Gastrocnemius medialis (tissue), 4 donors: ENCODE measurements at regions of chr4 and their contacts with region 1.

Region 1: GRCh38 chr4:100093091-100093866 is 97.0 kb downstream of the DDIT4L start:
- DNase-seq: peak; percentile 78 to 87
- ATAC-seq: peak; percentile 86 to 94
- H3K4me3 ChIP-seq: no peak overlapping the region
- H3K27ac ChIP-seq: peak overlapping the region; percentile 71 to 78 (median 74)
- H3K4me1 ChIP-seq: peaks cover 26 to 34% of the 10 kb centered on the region in 2 donors
- H3K27me3 ChIP-seq: no peaks in the 10 kb centered on the region
- CTCF ChIP-seq: peak; percentile 77 to 84 (median 82)
- POLR2A ChIP-seq: no peak

Region 2: GRCh38 chr4:99755223-99755944 is 337.9 kb before region 1 on chr4:
- in situ Hi-C with region 1: no loop called
- intact Hi-C with region 1: no loop called
- DNase-seq: no peak
- ATAC-seq: no peak
- H3K4me3 ChIP-seq: no peak overlapping the region
- H3K27ac ChIP-seq: no peak overlapping the region
- H3K4me1 ChIP-seq: peaks cover under 1 to 12% of the 10 kb centered on the region in 2 donors
- H3K27me3 ChIP-seq: no peaks in the 10 kb centered on the region
- CTCF ChIP-seq: no peak
- POLR2A ChIP-seq: no peak

Region 3: DNA sequence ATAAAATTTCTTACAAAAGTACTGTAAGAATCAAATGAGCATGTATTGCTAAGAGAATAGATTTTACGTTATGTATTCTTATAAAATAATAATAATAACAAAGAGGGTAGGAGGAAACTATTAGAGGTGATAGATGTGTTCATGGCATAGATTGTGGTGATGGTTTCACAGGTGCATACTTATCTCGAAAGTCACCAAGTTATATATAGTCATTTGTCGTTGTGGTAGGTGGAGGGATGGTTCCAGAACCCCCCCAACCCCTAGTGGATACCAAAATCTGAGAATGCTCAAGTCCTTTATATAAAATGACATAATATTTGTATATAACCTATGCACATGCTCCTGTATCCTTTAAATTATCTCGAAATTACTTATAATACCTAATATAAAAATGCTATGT is 106.5 kb before region 1 on chr4:
- in situ Hi-C with region 1: no loop called
- intact Hi-C with region 1: no loop called
- DNase-seq: no peak
- ATAC-seq: no peak
- H3K4me3 ChIP-seq: no peak overlapping the region
- H3K27ac ChIP-seq: no peak overlapping the region
- H3K4me1 ChIP-seq: no peaks in the 10 kb centered on the region
- H3K27me3 ChIP-seq: no peaks in the 10 kb centered on the region
- CTCF ChIP-seq: no peak
- POLR2A ChIP-seq: no peak

Region 4: GRCh38 chr4:100189820-100190642 is 96.8 kb after region 1 on chr4 and contains the start of gene DDIT4L:
- in situ Hi-C with region 1: no loop called
- intact Hi-C with region 1: loop called (anchors 1 kb)
- DNase-seq: peak; percentile 78 to 83
- ATAC-seq: peak; percentile 60 to 67
- H3K4me3 ChIP-seq: peak within 1 kb of the TSS; percentile 78 to 95 (median 84)
- H3K27ac ChIP-seq: peak within 1 kb of the TSS; percentile 93 to 97 (median 96)
- H3K4me1 ChIP-seq: peaks cover 15 to 24% of the 10 kb centered on the region in 2 donors
- H3K27me3 ChIP-seq: no peaks in the 10 kb centered on the region
- CTCF ChIP-seq: peak in 1 of 5 experiments; percentile 1
- POLR2A ChIP-seq: peak; percentile 91 to 96
- total RNA-seq, gene DDIT4L: 41.8 to 99.7 (median 69.9) TPM

Region 5: DNA sequence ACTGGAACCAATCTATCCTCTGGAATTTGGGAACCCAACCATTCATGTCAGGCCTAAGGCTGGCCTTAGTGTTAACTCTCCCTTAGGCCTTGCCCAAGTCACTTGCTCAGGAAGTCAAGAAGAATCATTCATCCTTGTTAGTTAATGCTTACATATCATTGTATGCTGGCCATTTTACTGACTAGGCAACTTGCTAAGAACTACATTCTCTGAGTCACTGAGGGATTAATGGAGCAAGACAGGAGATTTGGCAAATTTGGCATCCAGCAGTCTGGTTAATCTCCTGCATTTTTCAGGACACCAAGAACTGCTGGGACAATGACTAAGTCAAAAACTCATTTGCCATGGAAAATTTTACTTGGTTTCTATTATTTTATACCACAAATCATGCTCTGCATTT is 212.7 kb after region 1 on chr4:
- in situ Hi-C with region 1: no loop called
- intact Hi-C with region 1: loop called (anchors 5 kb)
- DNase-seq: no peak
- ATAC-seq: no peak
- H3K4me3 ChIP-seq: no peak overlapping the region
- H3K27ac ChIP-seq: peak overlapping the region; percentile 66 to 87 (median 77)
- H3K4me1 ChIP-seq: peaks cover 22 to 33% of the 10 kb centered on the region in 2 donors
- H3K27me3 ChIP-seq: no peaks in the 10 kb centered on the region
- CTCF ChIP-seq: no peak
- POLR2A ChIP-seq: no peak

Region 6: DNA sequence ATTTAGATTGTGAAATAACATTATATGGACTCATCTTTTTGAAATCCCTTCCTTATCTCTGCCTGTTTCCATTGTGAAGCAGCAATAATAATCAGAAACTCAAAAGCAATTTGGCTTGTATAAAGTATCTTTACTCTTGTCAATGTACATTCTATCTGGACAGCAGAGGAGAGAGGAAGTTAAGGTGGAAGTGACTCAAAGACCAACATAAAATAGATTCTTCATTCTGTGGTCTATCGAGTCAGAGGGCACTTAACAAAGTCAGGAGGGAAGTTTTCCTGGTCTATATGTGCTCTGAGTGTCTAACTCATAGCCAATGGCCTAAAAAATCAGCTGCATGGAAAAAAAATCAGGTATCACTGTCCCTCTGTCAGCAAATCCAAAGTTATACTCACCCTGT is 269.1 kb after region 1 on chr4:
- in situ Hi-C with region 1: no loop called
- intact Hi-C with region 1: no loop called
- DNase-seq: no peak
- ATAC-seq: no peak
- H3K4me3 ChIP-seq: no peak overlapping the region
- H3K27ac ChIP-seq: no peak overlapping the region
- H3K4me1 ChIP-seq: peaks cover 5 to 6% of the 10 kb centered on the region in 2 donors
- H3K27me3 ChIP-seq: no peaks in the 10 kb centered on the region
- CTCF ChIP-seq: no peak
- POLR2A ChIP-seq: no peak

Region 7: DNA sequence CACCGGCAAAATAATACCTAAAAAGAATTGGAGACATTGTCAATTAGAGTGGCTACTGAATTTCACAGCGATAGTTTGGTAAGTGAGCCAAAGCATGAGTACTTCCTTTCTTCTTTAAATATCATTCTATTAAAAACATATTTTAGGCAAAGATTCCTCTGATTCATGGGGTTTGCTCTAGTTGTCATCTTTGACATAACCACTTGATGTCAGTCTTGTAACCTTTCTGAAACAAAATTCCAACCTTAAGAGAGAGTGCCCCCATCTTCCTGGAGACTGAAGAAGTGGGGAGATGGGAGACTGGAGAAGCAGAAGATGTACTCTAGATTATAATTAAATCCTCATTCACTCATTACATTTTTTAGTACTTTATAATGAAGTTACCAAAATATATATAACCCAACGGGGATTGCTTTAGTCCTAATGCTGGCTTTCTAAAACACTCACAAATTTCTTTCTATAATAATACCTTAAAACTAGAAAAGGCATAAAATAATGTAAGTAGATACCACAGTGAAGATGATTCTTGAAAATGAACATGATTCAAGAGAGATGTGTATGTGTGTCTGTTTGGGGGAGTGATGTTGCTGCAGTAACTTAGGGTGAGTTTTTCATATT is 328.2 kb after region 1 on chr4:
- in situ Hi-C with region 1: loop called in 1 of 4 experiments (anchors 10 kb)
- intact Hi-C with region 1: loop called (anchors 5 kb)
- DNase-seq: no peak
- ATAC-seq: peak; percentile 75 to 76
- H3K4me3 ChIP-seq: peak overlapping the region; percentile 20 to 59 (median 42)
- H3K27ac ChIP-seq: peak overlapping the region; percentile 38 to 84 (median 75)
- H3K4me1 ChIP-seq: peaks cover 9 to 39% of the 10 kb centered on the region in 2 donors
- H3K27me3 ChIP-seq: no peaks in the 10 kb centered on the region
- CTCF ChIP-seq: peak; percentile 28 to 68 (median 62)
- POLR2A ChIP-seq: no peak

Region 8: GRCh38 chr4:100742045-100742444 is 648.8 kb after region 1 on chr4:
- in situ Hi-C with region 1: no loop called
- intact Hi-C with region 1: loop called (anchors 5 kb)
- DNase-seq: no peak
- ATAC-seq: peak in 1 of 2 donors; percentile 56
- H3K4me3 ChIP-seq: no peak overlapping the region
- H3K27ac ChIP-seq: no peak overlapping the region
- H3K4me1 ChIP-seq: no peaks in the 10 kb centered on the region
- H3K27me3 ChIP-seq: no peaks in the 10 kb centered on the region
- CTCF ChIP-seq: peak in 3 of 5 experiments; percentile 15 to 51 (median 49)
- POLR2A ChIP-seq: no peak

Region 9: GRCh38 chr4:101347557-101348366 is 1254.5 kb after region 1 on chr4:
- in situ Hi-C with region 1: no loop called
- intact Hi-C with region 1: loop called (anchors 5 kb)
- DNase-seq: peak; percentile 99
- ATAC-seq: peak; percentile 75 to 84
- H3K4me3 ChIP-seq: peak overlapping the region; percentile 82 to 96 (median 90)
- H3K27ac ChIP-seq: peak overlapping the region; percentile 95 to 100 (median 96)
- H3K4me1 ChIP-seq: peaks cover 31 to 40% of the 10 kb centered on the region in 2 donors
- H3K27me3 ChIP-seq: no peaks in the 10 kb centered on the region
- CTCF ChIP-seq: peak in 3 of 5 experiments; percentile 10 to 32 (median 13)
- POLR2A ChIP-seq: peak; percentile 63 to 77